WTC11 (cell line): ENCODE measurements at regions of chr17 and their contacts with region 1.

Region 1: DNA sequence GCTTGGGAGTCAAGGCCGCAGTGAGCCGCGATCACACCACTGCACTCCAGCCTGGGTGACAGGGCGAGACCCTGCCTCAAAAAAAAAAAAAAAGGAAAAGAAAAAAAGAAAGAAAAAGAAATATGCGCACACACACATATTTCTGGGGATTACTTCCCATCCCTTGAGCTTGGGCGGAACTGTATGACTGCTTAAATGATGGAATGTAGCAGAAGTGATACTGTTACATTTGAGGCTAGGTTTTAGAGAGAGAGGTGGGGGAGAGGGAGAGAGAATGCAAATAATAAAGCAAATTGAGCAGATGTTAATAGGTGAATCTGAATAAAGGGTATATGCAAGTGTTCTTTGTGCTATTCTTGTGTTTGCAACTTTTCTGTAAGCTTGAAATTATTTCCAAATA is 12.0 kb upstream of the USP32 start:
- DNase-seq: no peak
- ATAC-seq: no peak
- H3K4me3 Mint-ChIP-seq: no peak overlapping the region
- H3K27ac Mint-ChIP-seq: no peak overlapping the region
- H3K4me1 Mint-ChIP-seq: 0 out of 2 replicates have a peak, but pooled peaks cover 2% of the 10 kb centered on the region
- H3K27me3 Mint-ChIP-seq: no peaks in the 10 kb centered on the region; the same call in 1 of the 2 replicates
- CTCF ChIP-seq: no peak

Region 2: DNA sequence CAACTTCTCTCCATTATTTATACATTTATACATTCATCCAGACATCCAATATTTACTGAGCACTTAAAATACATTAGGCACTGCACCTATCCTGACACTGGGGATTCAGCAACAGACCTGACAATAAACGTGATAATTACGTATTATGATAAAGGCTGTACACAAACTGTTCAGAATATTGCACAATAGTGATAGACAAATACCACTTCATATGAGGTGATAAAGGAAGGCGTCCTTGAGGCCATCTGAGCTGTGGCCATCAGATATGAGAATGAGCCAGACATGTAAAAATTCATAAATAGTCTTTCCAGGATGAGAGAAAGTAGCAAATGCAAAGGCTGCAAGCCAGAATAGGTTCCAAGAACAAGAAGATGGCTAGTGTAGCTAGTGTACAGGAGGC is 20.6 kb before region 1 on chr17:
- CTCF ChIA-PET with region 1: no interaction called
- POLR2A ChIA-PET with region 1: interaction called, 12 read pairs
- DNase-seq: no peak
- ATAC-seq: no peak
- H3K4me3 Mint-ChIP-seq: peak overlapping the region; percentile 8
- H3K27ac Mint-ChIP-seq: peak overlapping the region; percentile 95
- H3K4me1 Mint-ChIP-seq: peaks cover 70% of the 10 kb centered on the region
- H3K27me3 Mint-ChIP-seq: no peaks in the 10 kb centered on the region
- CTCF ChIP-seq: no peak